ENCODE measurements at regions of chr18 and their contacts with region 1.

Region 1: GRCh38 chr18:23938043-23938756 is 76.4 kb upstream of the TTC39C start:
- DNase-seq: no peak
- ATAC-seq: no peak
- H3K4me3 Mint-ChIP-seq: no peak overlapping the region
- H3K27ac Mint-ChIP-seq: no peak overlapping the region
- H3K4me1 Mint-ChIP-seq: peaks cover 32% of the 10 kb centered on the region
- H3K27me3 Mint-ChIP-seq: no peaks in the 10 kb centered on the region
- CTCF ChIP-seq: no peak

Region 2: DNA sequence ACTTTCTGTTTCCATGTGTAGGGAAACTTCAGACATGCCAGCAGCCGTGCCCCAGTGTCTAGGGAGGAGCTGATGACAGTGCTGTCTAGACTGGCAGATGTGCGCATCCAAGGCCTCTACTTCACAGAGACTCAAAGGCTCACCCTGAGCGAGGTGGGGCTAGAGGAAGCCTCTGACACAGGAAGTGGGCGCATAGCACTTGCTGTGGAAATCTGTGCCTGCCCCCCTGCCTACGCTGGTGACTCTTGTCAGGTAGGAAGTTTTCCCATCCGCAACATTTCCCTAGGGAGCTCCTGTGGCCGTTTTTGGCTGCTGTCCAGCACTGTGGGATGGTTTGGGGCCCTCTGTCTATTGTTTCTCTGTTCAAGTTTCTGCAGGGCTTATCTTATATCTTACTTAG is 66.8 kb before region 1 on chr18:
- CTCF ChIA-PET with region 1: no interaction called
- POLR2A ChIA-PET with region 1: no interaction called
- intact Hi-C with region 1: loop called (anchors 10 kb)
- DNase-seq: no peak
- ATAC-seq: peak; percentile 80
- H3K4me3 Mint-ChIP-seq: peak overlapping the region; percentile 24
- H3K27ac Mint-ChIP-seq: peak overlapping the region; percentile 7
- H3K4me1 Mint-ChIP-seq: peaks cover 29% of the 10 kb centered on the region
- H3K27me3 Mint-ChIP-seq: peaks cover 6% of the 10 kb centered on the region
- CTCF ChIP-seq: no peak